CD8-positive, alpha-beta memory T cell (primary cell): ENCODE measurements at regions of chr4 and their contacts with region 1.

Region 1: DNA sequence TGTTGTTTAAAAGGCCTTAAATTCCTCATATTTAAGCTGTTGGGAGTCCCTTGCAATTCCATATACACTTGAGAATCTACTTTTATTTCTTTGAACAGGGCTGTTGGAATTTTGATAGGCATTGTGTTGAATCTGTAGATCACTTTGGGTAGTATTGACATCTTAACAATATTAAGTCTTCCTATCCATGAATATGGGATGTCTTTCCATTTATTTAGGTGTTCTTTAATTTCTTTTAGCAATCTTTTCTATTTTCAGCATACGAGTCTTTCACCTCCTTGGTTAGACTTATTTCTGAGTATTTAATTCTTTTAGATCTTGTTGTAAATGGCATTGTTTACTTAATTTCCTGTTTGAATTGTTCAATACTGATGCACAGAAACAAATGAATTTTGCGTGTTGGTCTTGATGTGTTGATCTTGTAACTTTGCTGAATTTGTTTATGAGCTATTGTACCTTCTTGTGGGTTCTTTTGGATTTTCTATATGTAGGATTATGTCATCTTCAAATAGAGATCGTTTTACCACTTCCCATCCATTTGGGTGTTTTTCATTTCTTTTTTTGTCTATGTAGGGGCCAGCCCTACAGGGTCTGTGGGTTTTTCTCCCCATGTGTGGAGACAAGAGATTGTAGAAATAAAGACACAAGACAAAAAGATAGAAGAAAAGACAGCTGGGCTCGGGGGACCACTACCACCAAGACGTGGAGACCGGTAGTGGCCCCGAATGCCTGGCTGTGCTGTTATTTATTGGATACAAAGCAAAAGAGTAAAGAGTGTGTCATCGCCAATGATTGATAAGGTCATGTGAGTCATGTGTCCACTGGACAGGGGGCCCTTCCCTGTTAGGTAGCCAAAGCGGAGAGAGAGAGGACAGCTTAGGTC is 18.2 kb upstream of the CTBP1 start:
- DNase-seq: peak in 2 of 5 donors; percentile 17 to 64
- H3K4me3 ChIP-seq: peak overlapping the region; percentile 58
- H3K4me3 Mint-ChIP-seq: peak overlapping the region; percentile 77 to 95 (median 83)
- H3K27ac ChIP-seq: peak overlapping the region; percentile 59
- H3K27ac Mint-ChIP-seq: peak overlapping the region; percentile 92 to 98 (median 95)
- H3K4me1 ChIP-seq: peaks cover 8% of the 10 kb centered on the region
- H3K4me1 Mint-ChIP-seq: peaks cover 10 to 15% (median 11%) of the 10 kb centered on the region in 3 donors
- H3K27me3 ChIP-seq: no peaks in the 10 kb centered on the region
- H3K27me3 Mint-ChIP-seq: peaks cover 0 to 2% of the 10 kb centered on the region in 2 donors

Region 2: GRCh38 chr4:1130316-1131186 is 136.6 kb before region 1 on chr4:
- CTCF ChIA-PET with region 1: interaction called, 41 read pairs
- POLR2A ChIA-PET with region 1: no interaction called
- DNase-seq: peak; percentile 56 to 82 (median 70)
- H3K4me3 ChIP-seq: no peak overlapping the region
- H3K4me3 Mint-ChIP-seq: no peak overlapping the region
- H3K27ac ChIP-seq: no peak overlapping the region
- H3K27ac Mint-ChIP-seq: peak overlapping the region in 1 of 8 donors; percentile 75
- H3K4me1 ChIP-seq: peaks cover 4% of the 10 kb centered on the region
- H3K4me1 Mint-ChIP-seq: peaks cover 3 to 5% (median 5%) of the 10 kb centered on the region in 3 donors
- H3K27me3 ChIP-seq: no peaks in the 10 kb centered on the region
- H3K27me3 Mint-ChIP-seq: peaks cover 6 to 13% of the 10 kb centered on the region in 2 donors

Region 3: GRCh38 chr4:1154523-1155182 is 112.5 kb before region 1 on chr4:
- CTCF ChIA-PET with region 1: no interaction called
- POLR2A ChIA-PET with region 1: no interaction called
- DNase-seq: no peak
- H3K4me3 ChIP-seq: no peak overlapping the region
- H3K4me3 Mint-ChIP-seq: no peak overlapping the region
- H3K27ac ChIP-seq: no peak overlapping the region
- H3K27ac Mint-ChIP-seq: peak overlapping the region in 1 of 8 donors; percentile 63
- H3K4me1 ChIP-seq: no peaks in the 10 kb centered on the region
- H3K4me1 Mint-ChIP-seq: no peaks in the 10 kb centered on the region
- H3K27me3 ChIP-seq: peaks cover 4% of the 10 kb centered on the region
- H3K27me3 Mint-ChIP-seq: peaks cover 21 to 22% of the 10 kb centered on the region in 2 donors

Region 4: DNA sequence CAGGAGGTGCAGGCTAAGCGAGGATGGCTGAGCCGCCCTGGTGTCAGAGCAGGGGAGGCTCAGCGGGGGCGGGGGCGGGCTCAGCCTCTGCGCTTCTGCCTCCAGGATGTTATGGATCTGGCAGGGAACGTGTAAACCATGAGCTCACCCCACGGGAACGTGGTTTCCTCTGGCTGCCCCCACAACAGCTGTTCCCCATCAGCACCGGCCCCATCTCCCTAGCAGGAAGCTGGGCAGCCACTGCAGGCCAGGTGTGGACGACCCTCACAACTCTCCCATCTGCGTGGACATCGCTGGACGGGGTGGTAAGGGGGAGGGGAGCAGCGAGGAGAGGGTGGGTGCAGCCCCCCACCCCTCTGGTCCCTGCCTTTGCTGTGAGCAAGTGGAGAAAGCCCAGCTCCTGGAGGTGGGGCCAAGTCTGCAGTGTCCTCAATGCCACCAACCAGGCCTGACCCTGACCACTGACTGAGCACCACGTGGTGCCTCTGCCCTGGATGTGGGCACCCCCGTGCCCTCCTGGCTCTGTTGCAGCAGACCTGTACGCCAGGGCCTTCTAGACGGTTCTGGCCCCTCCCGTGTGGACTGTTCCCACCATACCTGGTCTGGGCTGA is 66.6 kb before region 1 on chr4:
- CTCF ChIA-PET with region 1: interaction called, 14 read pairs
- POLR2A ChIA-PET with region 1: interaction called, 3 read pairs
- DNase-seq: peak in 4 of 5 donors; percentile 18 to 54 (median 32)
- H3K4me3 ChIP-seq: peak overlapping the region; percentile 59
- H3K4me3 Mint-ChIP-seq: peak overlapping the region; percentile 64 to 98 (median 89)
- H3K27ac ChIP-seq: peak overlapping the region; percentile 81
- H3K27ac Mint-ChIP-seq: peak overlapping the region; percentile 92 to 100 (median 97)
- H3K4me1 ChIP-seq: peaks cover 55% of the 10 kb centered on the region
- H3K4me1 Mint-ChIP-seq: peaks cover 58 to 86% (median 66%) of the 10 kb centered on the region in 3 donors
- H3K27me3 ChIP-seq: no peaks in the 10 kb centered on the region
- H3K27me3 Mint-ChIP-seq: no peaks in the 10 kb centered on the region

Region 5: DNA sequence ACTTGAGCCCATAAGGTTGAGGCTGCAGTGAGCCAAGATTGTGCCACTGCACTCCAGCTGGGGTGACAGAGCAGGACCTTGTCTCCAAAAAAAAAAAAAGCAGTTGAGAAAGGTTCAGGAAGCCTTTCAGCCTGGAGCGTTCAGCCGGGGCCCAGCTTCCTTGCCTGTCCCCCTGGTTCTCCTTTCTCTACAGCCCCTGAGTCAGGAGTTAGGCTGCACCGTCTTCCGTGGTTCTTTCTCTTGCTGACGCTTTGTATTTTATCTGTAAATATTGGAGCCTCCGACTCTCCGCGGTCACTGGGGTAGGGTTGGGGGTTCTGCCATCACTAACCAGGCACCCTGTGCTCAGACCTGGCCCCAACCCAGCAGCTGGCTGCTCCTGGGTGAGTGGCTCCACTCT is 66.1 kb after region 1 on chr4:
- CTCF ChIA-PET with region 1: no interaction called
- POLR2A ChIA-PET with region 1: no interaction called
- DNase-seq: no peak
- H3K4me3 ChIP-seq: no peak overlapping the region
- H3K4me3 Mint-ChIP-seq: no peak overlapping the region
- H3K27ac ChIP-seq: no peak overlapping the region
- H3K27ac Mint-ChIP-seq: no peak overlapping the region
- H3K4me1 ChIP-seq: peaks cover 37% of the 10 kb centered on the region
- H3K4me1 Mint-ChIP-seq: peaks cover 31 to 54% (median 50%) of the 10 kb centered on the region in 3 donors
- H3K27me3 ChIP-seq: no peaks in the 10 kb centered on the region
- H3K27me3 Mint-ChIP-seq: no peaks in the 10 kb centered on the region

Region 6: DNA sequence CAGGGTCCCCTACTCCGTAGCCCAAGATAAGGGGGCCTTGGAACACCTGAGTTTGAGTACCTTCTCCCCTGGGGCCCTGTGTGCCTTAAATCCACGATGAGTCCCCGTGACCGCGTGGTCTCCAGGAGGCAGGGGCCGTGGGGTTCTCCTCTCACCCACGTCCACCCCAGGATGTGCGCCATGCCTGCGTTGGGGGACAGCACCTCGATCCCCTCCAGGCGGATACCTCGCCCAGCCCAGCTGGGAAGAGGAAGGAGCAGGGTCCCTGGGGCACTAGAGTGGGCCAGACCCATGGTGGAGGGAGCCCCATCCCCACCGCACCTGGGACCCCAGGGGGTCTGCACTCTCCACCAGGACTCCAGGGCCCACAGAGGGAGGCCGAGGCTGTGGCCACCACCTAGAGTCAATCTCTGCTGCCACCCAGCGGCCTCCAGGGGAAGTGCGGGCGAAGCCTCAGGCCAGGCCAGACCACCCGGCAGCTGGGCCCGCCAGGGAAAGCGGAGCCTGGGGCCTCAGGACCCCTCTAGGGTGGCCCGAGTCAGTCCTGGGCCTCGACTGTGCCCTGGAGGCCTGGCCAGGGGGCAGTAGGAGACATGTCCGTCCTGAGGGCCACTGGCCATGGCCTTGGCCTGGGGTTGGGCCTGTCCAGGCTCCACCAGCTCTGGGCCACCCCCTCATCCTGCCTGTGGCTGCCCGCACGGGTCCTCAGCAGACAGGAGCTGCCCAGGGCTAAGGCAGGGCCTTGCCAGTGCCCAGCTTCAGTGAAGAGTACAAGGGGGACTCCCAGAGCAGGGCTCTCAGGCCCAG is 362.0 kb after region 1 on chr4:
- CTCF ChIA-PET with region 1: no interaction called
- POLR2A ChIA-PET with region 1: no interaction called
- DNase-seq: peak; percentile 58 to 76 (median 61)
- H3K4me3 ChIP-seq: no peak overlapping the region
- H3K4me3 Mint-ChIP-seq: no peak overlapping the region
- H3K27ac ChIP-seq: no peak overlapping the region
- H3K27ac Mint-ChIP-seq: no peak overlapping the region
- H3K4me1 ChIP-seq: no peaks in the 10 kb centered on the region
- H3K4me1 Mint-ChIP-seq: no peaks in the 10 kb centered on the region
- H3K27me3 ChIP-seq: no peaks in the 10 kb centered on the region
- H3K27me3 Mint-ChIP-seq: peaks cover 3 to 6% of the 10 kb centered on the region in 2 donors